ENCODE measurements at regions of chr1 and their contacts with region 1.

Region 1: GRCh38 chr1:10975567-10976326 is 36.7 kb upstream of the TARDBP start:
- DNase-seq: peak; percentile 33
- ATAC-seq: peak; percentile 64
- H3K4me3 ChIP-seq: no peak overlapping the region
- H3K27ac ChIP-seq: no peak overlapping the region
- H3K4me1 ChIP-seq: no peaks in the 10 kb centered on the region
- H3K27me3 ChIP-seq: no peaks in the 10 kb centered on the region
- CTCF ChIP-seq: no peak

Region 2: GRCh38 chr1:10637834-10638558 is 337.8 kb before region 1 on chr1:
- CTCF ChIA-PET with region 1: no interaction called
- POLR2A ChIA-PET with region 1: interaction called, 13 read pairs
- in situ Hi-C with region 1: no loop called
- intact Hi-C with region 1: no loop called
- DNase-seq: no peak
- ATAC-seq: no peak
- H3K4me3 ChIP-seq: no peak overlapping the region
- H3K27ac ChIP-seq: no peak overlapping the region
- H3K4me1 ChIP-seq: peaks cover 11% of the 10 kb centered on the region
- H3K27me3 ChIP-seq: no peaks in the 10 kb centered on the region
- CTCF ChIP-seq: no peak

Measured in Panc1 (cell line).